B cell (primary cell): ENCODE measurements at regions of chr12 and their contacts with region 1.

Region 1: DNA sequence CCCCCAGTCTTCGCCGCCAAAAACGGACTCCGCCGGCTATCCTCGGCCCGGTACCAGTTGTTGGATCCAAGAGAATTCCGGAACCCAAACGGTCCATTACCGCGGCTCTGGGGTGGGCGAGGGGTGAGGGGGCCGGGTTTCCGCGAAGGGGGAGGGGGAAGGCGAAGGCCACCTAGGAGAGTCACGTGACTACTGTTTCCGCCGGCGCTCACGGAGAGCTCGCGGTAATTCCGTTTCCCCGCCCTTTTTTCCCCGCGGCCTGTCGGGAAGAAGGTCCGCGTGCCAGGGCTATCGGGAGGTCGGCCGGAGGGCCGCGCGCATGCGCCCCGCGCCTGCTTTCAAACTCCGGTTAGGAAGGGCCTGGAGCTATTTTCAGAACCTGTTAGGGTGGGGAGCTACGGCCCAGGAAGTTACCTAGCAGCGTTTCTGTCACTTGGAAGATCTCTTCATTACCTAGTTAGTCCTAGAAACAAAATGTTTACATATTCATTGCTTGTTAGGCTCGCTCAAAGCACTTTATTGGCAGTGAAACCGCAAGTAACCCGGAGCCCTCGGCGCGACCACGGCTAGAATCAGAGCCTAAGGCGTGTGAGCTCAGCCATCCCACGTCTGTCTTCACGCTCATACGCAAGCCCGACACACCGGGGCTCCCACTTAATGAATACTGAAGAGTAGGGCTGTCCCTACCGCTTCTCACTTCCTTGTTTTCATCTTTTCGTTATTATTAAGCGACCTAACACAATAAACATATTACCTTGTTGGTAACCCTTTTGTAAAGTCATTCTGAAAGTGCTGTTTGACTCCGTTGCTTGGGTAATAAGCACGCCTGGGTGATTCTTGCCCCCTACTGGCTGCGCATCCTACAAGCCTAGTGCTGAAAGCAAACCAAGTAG is 624 bp upstream of the SBNO1 start:
- DNase-seq: peak; percentile 99
- ATAC-seq: peak; percentile 70
- H3K4me3 ChIP-seq: peak overlapping the region; percentile 68 to 90 (median 80)
- H3K4me3 Mint-ChIP-seq: peak overlapping the region; percentile 87
- H3K27ac ChIP-seq: peak overlapping the region; percentile 99
- H3K27ac Mint-ChIP-seq: peak overlapping the region; percentile 95
- H3K4me1 ChIP-seq: peaks cover 17 to 23% of the 10 kb centered on the region in 2 donors
- H3K4me1 Mint-ChIP-seq: peaks cover 16% of the 10 kb centered on the region
- H3K27me3 ChIP-seq: no peaks in the 10 kb centered on the region
- H3K27me3 Mint-ChIP-seq: no peaks in the 10 kb centered on the region
- CTCF ChIP-seq: peak; percentile 84

Region 2: GRCh38 chr12:122500685-122501488 is 864.4 kb before region 1 on chr12 and contains the start of gene ZCCHC8:
- CTCF ChIA-PET with region 1: no interaction called
- POLR2A ChIA-PET with region 1: no interaction called
- intact Hi-C with region 1: loop called (anchors 2 kb)
- DNase-seq: peak; percentile 97
- ATAC-seq: peak; percentile 91
- H3K4me3 ChIP-seq: peak within 1 kb of the TSS; percentile 71 to 93 (median 84)
- H3K4me3 Mint-ChIP-seq: peak within 1 kb of the TSS; percentile 83
- H3K27ac ChIP-seq: peak within 1 kb of the TSS; percentile 79 to 93
- H3K27ac Mint-ChIP-seq: peak within 1 kb of the TSS; percentile 87
- H3K4me1 ChIP-seq: peaks cover 15 to 30% of the 10 kb centered on the region in 2 donors
- H3K4me1 Mint-ChIP-seq: peaks cover 36% of the 10 kb centered on the region
- H3K27me3 ChIP-seq: no peaks in the 10 kb centered on the region
- H3K27me3 Mint-ChIP-seq: no peaks in the 10 kb centered on the region
- CTCF ChIP-seq: no peak
- total RNA-seq, gene ZCCHC8: 56.2 and 57.0 TPM in 2 replicates

Region 3: GRCh38 chr12:123271001-123271729 is 94.1 kb before region 1 on chr12:
- CTCF ChIA-PET with region 1: no interaction called
- POLR2A ChIA-PET with region 1: interaction called, 3 read pairs
- intact Hi-C with region 1: loop called (anchors 1 kb)
- DNase-seq: peak; percentile 81
- ATAC-seq: peak; percentile 74
- H3K4me3 ChIP-seq: peak overlapping the region in 3 of 5 experiments; percentile 52 to 56 (median 54)
- H3K4me3 Mint-ChIP-seq: no peak overlapping the region
- H3K27ac ChIP-seq: no peak overlapping the region
- H3K27ac Mint-ChIP-seq: no peak overlapping the region
- H3K4me1 ChIP-seq: peaks cover 31 to 37% of the 10 kb centered on the region in 2 donors
- H3K4me1 Mint-ChIP-seq: peaks cover 29% of the 10 kb centered on the region
- H3K27me3 ChIP-seq: peaks cover 0 to 6% (median 0%) of the 10 kb centered on the region in 4 experiments
- H3K27me3 Mint-ChIP-seq: no peaks in the 10 kb centered on the region
- CTCF ChIP-seq: peak; percentile 38

Region 4: DNA sequence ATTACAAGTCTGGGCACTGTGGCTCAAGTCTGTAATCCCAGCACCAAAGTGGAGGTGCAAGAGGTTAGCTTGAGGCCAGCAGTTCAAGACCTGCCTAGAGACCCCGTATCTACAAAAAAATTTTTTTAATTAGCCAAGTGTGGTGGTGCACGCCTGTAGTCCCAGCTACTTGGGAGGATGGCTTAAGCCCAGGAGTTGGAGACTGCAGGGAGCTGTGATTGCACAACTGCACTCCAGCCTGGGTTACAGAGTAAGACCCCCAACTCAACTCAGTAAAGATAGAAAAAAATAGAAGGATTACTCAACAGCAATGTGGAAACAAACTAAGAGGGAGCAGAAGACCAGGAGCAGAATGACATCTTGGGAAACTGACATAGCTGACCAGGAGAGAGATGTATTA is 13.9 kb before region 1 on chr12:
- CTCF ChIA-PET with region 1: no interaction called
- POLR2A ChIA-PET with region 1: no interaction called
- intact Hi-C with region 1: no loop called
- DNase-seq: no peak
- ATAC-seq: no peak
- H3K4me3 ChIP-seq: no peak overlapping the region
- H3K4me3 Mint-ChIP-seq: no peak overlapping the region
- H3K27ac ChIP-seq: no peak overlapping the region
- H3K27ac Mint-ChIP-seq: no peak overlapping the region
- H3K4me1 ChIP-seq: no peaks in the 10 kb centered on the region
- H3K4me1 Mint-ChIP-seq: peaks cover 30% of the 10 kb centered on the region
- H3K27me3 ChIP-seq: no peaks in the 10 kb centered on the region
- H3K27me3 Mint-ChIP-seq: no peaks in the 10 kb centered on the region
- CTCF ChIP-seq: no peak

Region 5: DNA sequence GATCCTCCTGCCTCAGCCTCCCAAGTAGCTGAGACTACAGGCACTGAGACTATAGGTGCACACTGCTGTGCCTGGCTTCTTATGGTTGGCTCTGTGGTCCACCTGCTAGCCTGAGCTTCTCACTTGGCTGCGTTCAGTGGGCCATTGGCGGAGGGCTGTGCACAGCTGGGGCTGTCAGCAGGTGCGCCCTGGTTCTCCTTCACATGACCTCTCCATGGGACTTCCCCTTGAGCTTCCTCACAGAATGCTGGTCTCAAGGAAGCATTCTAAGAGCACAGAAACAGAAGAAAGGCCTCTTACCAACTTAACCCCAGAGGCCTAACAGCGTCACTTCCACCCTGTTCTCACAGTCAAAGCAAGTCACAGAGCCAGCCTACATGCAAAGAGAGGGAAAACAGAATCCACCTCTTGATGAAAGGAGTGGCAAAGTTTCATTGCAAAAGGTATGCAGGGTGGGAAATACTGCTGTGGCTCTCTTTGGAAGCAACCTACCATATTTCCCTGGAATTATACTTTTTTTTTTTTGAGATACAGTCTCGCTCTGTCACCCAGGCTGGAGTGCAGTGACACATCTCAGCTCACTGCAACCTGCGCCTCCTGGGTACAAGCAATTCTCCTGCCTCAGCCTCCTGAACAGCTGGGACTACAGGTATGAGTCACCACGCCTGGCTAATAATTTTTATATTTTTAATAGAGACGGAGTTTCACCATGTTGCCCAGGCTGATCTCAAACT is 61.9 kb after region 1 on chr12:
- CTCF ChIA-PET with region 1: interaction called, 6 read pairs
- POLR2A ChIA-PET with region 1: interaction called, 16 read pairs
- intact Hi-C with region 1: loop called (anchors 2 kb)
- DNase-seq: peak; percentile 94
- ATAC-seq: peak; percentile 95
- H3K4me3 ChIP-seq: no peak overlapping the region
- H3K4me3 Mint-ChIP-seq: peak overlapping the region; percentile 74
- H3K27ac ChIP-seq: peak overlapping the region; percentile 67 to 76
- H3K27ac Mint-ChIP-seq: peak overlapping the region; percentile 95
- H3K4me1 ChIP-seq: peaks cover 23 to 29% of the 10 kb centered on the region in 2 donors
- H3K4me1 Mint-ChIP-seq: peaks cover 36% of the 10 kb centered on the region
- H3K27me3 ChIP-seq: no peaks in the 10 kb centered on the region
- H3K27me3 Mint-ChIP-seq: no peaks in the 10 kb centered on the region
- CTCF ChIP-seq: no peak

Region 6: GRCh38 chr12:123457980-123458783 is 92.9 kb after region 1 on chr12 and contains the start of gene SNRNP35:
- CTCF ChIA-PET with region 1: interaction called, 5 read pairs
- POLR2A ChIA-PET with region 1: interaction called, 15 read pairs
- intact Hi-C with region 1: loop called (anchors 1 kb)
- DNase-seq: peak; percentile 96
- ATAC-seq: peak; percentile 79
- H3K4me3 ChIP-seq: peak within 1 kb of the TSS; percentile 76 to 99 (median 95)
- H3K4me3 Mint-ChIP-seq: peak within 1 kb of the TSS; percentile 99
- H3K27ac ChIP-seq: peak within 1 kb of the TSS; percentile 92 to 98
- H3K27ac Mint-ChIP-seq: peak within 1 kb of the TSS; percentile 100
- H3K4me1 ChIP-seq: peaks cover 12 to 17% of the 10 kb centered on the region in 2 donors
- H3K4me1 Mint-ChIP-seq: peaks cover 26% of the 10 kb centered on the region
- H3K27me3 ChIP-seq: no peaks in the 10 kb centered on the region
- H3K27me3 Mint-ChIP-seq: no peaks in the 10 kb centered on the region
- CTCF ChIP-seq: no peak
- total RNA-seq, gene SNRNP35: 57.8 and 58.2 TPM in 2 replicates

Region 7: DNA sequence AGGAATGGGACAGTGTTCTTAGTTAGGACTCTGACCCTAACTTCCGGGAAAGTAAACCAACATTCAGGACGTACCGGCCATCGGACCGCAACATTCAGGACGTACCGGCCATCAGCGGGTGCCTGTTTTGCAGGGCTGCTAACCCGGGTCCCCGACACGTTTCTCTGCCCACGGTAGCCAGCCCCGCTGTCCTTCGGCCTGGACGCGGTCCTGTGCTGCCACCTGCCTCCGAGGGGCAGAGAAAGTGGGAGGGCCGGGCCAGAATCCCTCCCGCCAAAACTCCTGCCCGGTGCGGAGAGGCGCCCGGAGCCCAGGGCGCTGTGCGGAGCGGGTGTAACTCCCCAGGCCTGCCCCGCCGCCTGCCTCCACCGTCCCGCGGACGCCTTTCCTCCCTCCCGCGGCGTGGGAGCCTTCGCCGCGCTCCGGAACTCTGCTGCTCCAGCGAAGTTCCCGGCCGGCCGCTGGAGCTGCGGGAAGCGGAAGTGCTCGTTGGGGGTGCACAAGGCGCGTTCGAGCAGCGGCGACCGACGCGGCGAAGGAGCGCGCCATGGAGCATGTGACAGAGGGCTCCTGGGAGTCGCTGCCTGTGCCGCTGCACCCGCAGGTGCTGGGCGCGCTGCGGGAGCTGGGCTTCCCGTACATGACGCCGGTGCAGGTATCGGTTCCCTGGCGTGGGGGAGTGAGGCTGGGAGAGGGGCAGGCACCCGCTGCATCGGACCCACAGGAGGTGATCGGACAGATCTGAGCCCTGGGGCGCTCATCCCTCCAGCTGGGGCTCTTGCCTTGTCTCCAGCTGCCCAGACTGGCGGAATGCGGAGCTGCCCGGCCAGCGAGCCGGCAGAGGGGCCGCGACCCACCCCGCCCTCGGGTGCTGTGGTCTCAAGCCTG is 236.6 kb after region 1 on chr12 and contains the start of gene DDX55:
- CTCF ChIA-PET with region 1: interaction called, 5 read pairs
- POLR2A ChIA-PET with region 1: interaction called, 7 read pairs
- intact Hi-C with region 1: loop called (anchors 1 kb)
- DNase-seq: peak; percentile 93
- ATAC-seq: peak; percentile 89
- H3K4me3 ChIP-seq: peak within 1 kb of the TSS; percentile 62 to 99 (median 93)
- H3K4me3 Mint-ChIP-seq: peak within 1 kb of the TSS; percentile 99
- H3K27ac ChIP-seq: peak within 1 kb of the TSS; percentile 74 to 85
- H3K27ac Mint-ChIP-seq: peak within 1 kb of the TSS; percentile 97
- H3K4me1 ChIP-seq: peaks cover 12 to 23% of the 10 kb centered on the region in 2 donors
- H3K4me1 Mint-ChIP-seq: peaks cover 23% of the 10 kb centered on the region
- H3K27me3 ChIP-seq: no peaks in the 10 kb centered on the region
- H3K27me3 Mint-ChIP-seq: no peaks in the 10 kb centered on the region
- CTCF ChIP-seq: peak; percentile 40
- total RNA-seq, gene DDX55: 33.3 and 35.6 TPM in 2 replicates

Region 8: GRCh38 chr12:124863416-124864325 is 1498.4 kb after region 1 on chr12 and contains the start of gene SCARB1:
- CTCF ChIA-PET with region 1: no interaction called
- POLR2A ChIA-PET with region 1: no interaction called
- intact Hi-C with region 1: no loop called
- DNase-seq: peak; percentile 87
- ATAC-seq: peak; percentile 89
- H3K4me3 ChIP-seq: peak within 1 kb of the TSS; percentile 19 to 78 (median 62)
- H3K4me3 Mint-ChIP-seq: peak within 1 kb of the TSS; percentile 87
- H3K27ac ChIP-seq: peak within 1 kb of the TSS; percentile 63 to 80
- H3K27ac Mint-ChIP-seq: peak within 1 kb of the TSS; percentile 87
- H3K4me1 ChIP-seq: peaks cover 18 to 31% of the 10 kb centered on the region in 2 donors
- H3K4me1 Mint-ChIP-seq: peaks cover 42% of the 10 kb centered on the region
- H3K27me3 ChIP-seq: no peaks in the 10 kb centered on the region
- H3K27me3 Mint-ChIP-seq: no peaks in the 10 kb centered on the region
- CTCF ChIP-seq: no peak
- total RNA-seq, gene SCARB1: 25.8 and 26.8 TPM in 2 replicates